HEK293 (cell line): ENCODE measurements at regions of chr1 and their contacts with region 1.

Region 1: GRCh38 chr1:43358746-43359693 is at the start of gene CDC20:
- H3K4me3 ChIP-seq: peak within 1 kb of the TSS; percentile 86
- H3K27ac ChIP-seq: peak within 1 kb of the TSS; percentile 92
- H3K4me1 ChIP-seq: peaks cover 6% of the 10 kb centered on the region
- CTCF ChIP-seq: peak; percentile 39; the same call in 1 of the 2 replicates

Region 2: GRCh38 chr1:43206600-43207228 is 152.3 kb before region 1 on chr1:
- CTCF ChIA-PET with region 1: no interaction called
- POLR2A ChIA-PET with region 1: interaction called, 13 read pairs
- H3K4me3 ChIP-seq: peak overlapping the region; percentile 7; the same call in 1 of the 2 replicates
- H3K27ac ChIP-seq: no peak overlapping the region
- H3K4me1 ChIP-seq: no peaks in the 10 kb centered on the region
- CTCF ChIP-seq: no peak

Region 3: GRCh38 chr1:43348809-43349583 is 10.0 kb before region 1 on chr1:
- CTCF ChIA-PET with region 1: interaction called, 6 read pairs
- POLR2A ChIA-PET with region 1: interaction called, 32 read pairs
- H3K4me3 ChIP-seq: peak overlapping the region; percentile 55
- H3K27ac ChIP-seq: peak overlapping the region; percentile 77
- H3K4me1 ChIP-seq: 0 out of 2 replicates have a peak, but pooled peaks cover 3% of the 10 kb centered on the region
- CTCF ChIP-seq: peak; percentile 39; the same call in 1 of the 2 replicates

Region 4: GRCh38 chr1:43373066-43373940 is 14.3 kb after region 1 on chr1:
- CTCF ChIA-PET with region 1: interaction called, 8 read pairs
- POLR2A ChIA-PET with region 1: interaction called, 34 read pairs
- H3K4me3 ChIP-seq: no peak overlapping the region
- H3K27ac ChIP-seq: no peak overlapping the region
- H3K4me1 ChIP-seq: peaks cover 5% of the 10 kb centered on the region; the same call in 1 of the 2 replicates
- CTCF ChIP-seq: no peak

Region 5: DNA sequence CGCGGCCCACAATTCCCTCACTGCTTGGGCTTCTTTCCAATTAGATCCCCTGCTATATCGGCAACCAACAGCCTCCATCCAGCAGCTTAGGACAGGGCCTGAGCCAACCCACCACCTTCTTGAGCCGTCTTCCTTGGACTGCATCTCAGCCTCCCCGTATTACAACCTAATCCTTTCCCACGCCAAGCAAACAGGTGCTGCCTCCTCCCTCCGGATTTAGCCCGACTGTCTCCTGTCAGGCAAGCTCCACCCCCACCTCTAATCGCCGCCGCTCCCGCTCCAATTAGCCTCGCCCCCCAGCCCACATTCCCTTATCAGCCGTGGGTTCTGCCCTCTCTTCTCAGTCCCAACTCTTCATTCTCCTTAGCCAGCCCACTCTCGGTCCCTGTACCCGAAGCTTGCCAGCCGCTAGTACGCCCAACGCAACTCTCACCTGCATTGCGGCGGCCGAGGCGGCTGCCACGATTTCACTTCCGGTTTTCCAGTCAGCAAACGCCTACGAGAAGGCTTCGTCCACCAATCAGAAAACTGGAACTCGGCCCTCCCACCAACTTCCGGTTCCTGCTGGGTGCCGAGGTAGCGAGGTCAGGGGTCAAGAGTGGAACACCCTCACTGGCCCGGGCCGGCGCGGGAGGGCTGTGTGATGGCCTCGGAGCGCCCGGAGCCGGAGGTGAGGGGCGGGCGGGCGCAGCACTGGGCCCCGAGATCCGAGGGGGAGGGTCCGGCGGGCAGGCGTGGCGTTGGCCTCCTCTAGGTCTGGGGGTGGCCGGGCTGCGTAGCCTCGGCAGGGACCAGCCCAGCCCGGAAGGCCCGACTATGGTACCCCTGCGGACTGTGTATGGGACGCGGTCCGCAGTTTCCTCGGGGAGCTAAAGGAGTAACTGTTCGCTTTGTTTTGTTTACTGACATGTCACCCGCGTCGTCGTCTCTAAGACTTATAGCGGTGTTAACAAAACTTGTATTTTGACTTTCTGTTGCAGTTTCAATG is 30.6 kb after region 1 on chr1 and contains the starts of genes MED8 and SZT2:
- CTCF ChIA-PET with region 1: interaction called, 8 read pairs
- POLR2A ChIA-PET with region 1: interaction called, 14 read pairs
- H3K4me3 ChIP-seq: peak within 1 kb of the TSS; percentile 61
- H3K27ac ChIP-seq: peak within 1 kb of the TSS; percentile 67
- H3K4me1 ChIP-seq: no peaks in the 10 kb centered on the region
- CTCF ChIP-seq: no peak

Region 6: DNA sequence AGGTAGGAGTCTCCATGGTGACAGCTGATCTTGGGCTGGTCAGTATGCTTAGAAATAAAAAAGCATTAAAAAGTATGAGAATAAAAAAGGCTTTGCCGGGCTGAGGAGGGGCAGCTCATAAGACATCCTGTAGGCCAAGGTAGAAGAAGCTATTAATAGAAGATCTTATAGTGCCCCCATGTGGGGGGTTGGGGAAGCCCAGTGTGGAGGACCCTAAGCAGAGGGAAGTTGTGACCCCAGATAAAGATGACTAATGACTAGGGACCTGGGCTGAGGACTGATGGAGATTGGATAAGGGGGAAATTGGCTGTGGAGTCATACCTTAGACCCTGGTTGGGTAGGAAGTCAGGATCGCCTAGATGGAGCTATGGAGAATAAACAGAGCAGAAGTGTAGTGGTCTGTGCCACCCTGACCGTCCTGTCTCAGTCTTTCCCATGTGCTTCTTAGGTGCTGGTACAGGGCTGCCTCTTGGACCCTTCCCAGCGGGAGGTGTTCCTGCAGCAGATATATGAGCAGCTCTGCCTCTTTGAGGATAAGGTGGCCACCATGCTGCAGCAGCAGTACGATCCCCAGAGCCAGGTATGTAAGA is 55.7 kb after region 1 on chr1:
- CTCF ChIA-PET with region 1: interaction called, 11 read pairs
- POLR2A ChIA-PET with region 1: interaction called, 15 read pairs
- H3K4me3 ChIP-seq: no peak overlapping the region
- H3K27ac ChIP-seq: no peak overlapping the region
- H3K4me1 ChIP-seq: no peaks in the 10 kb centered on the region
- CTCF ChIP-seq: peak; percentile 45; the same call in 1 of the 2 replicates

Region 7: DNA sequence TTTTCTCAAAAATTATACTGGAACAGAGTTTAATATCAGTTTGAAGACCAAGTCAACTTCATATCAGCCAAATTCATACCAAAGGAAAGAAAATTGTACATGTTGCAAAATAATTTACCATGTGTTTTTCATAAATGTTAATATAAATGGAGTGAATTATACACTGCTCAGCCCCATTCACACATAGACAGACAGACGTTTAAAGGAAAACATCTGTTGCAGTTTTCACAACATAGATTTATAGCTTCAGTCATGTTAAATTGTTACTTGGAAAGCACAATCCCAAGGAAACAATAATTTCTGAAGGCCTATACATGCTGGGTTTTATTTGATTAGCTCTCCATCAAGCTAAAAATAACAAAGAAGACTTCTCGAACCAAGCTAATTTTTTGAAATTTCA is 122.5 kb after region 1 on chr1:
- CTCF ChIA-PET with region 1: no interaction called
- POLR2A ChIA-PET with region 1: no interaction called
- H3K4me3 ChIP-seq: no peak overlapping the region
- H3K27ac ChIP-seq: no peak overlapping the region
- H3K4me1 ChIP-seq: no peaks in the 10 kb centered on the region
- CTCF ChIP-seq: no peak